ENCODE measurements at regions of chr9 and their contacts with region 1.

Region 1: GRCh38 chr9:122810306-122810946 is 10.5 kb downstream of the OR1K1 start:
- DNase-seq: peak; percentile 59 to 83
- H3K4me3 ChIP-seq: no peak overlapping the region
- H3K27ac ChIP-seq: no peak overlapping the region
- H3K4me1 ChIP-seq: peaks cover 0 to under 1% (median 0%) of the 10 kb centered on the region in 4 donors
- H3K27me3 ChIP-seq: no peaks in the 10 kb centered on the region
- CTCF ChIP-seq: peak; percentile 69 to 85

Region 2: GRCh38 chr9:122464633-122465567 is 345.5 kb before region 1 on chr9:
- intact Hi-C with region 1: loop called (anchors 2 kb)
- DNase-seq: peak; percentile 79 to 86
- H3K4me3 ChIP-seq: peak overlapping the region; percentile 34 to 40
- H3K27ac ChIP-seq: no peak overlapping the region
- H3K4me1 ChIP-seq: peaks cover 0 to 13% (median 5%) of the 10 kb centered on the region in 4 donors
- H3K27me3 ChIP-seq: peaks cover 0 to 20% of the 10 kb centered on the region in 2 donors
- CTCF ChIP-seq: peak; percentile 73 to 89